Aorta (tissue), 5 donors: ENCODE measurements at regions of chrX and their contacts with region 1.

Region 1: DNA sequence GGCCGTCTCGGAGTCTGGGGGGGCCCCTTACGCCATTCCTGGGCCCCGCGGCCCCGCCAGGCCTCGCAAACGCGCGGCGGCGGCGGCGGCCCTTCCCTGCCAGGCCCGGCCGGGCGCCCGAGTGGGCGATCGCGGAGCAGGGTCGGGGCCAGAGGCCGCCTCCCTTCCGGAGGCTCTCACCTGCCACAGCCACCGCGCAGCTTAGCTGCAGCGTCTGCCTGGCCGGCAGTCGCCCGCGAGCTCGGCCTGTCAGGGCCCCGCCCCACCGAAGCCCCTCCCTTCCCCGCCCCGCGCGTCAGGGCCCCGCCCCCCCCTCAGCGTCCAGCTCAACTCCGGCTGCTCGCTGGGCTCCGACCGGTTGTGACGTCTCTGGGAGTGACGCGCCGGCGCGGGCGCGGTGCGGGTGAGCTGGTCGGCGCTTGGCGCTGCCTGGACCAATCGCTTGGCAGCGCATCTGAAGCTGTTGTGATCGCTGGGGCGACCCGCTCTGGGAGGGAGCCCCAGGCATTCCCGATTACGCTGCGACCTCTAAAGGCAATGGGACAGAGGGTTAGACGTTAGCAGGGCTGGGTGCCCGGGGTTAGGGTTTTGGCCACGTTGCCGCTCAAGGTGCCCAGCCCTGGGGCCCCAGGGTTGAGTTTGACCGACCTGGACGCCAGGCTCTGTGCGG is at the start of gene SLC10A3:
- DNase-seq: peak; percentile 96 to 97
- ATAC-seq: peak; percentile 93
- H3K4me3 ChIP-seq: peak within 1 kb of the TSS; percentile 56 to 61
- H3K27ac ChIP-seq: peak within 1 kb of the TSS; percentile 51 to 91
- H3K4me1 ChIP-seq: no peaks in the 10 kb centered on the region
- H3K27me3 ChIP-seq: peaks cover 0 to 1% of the 10 kb centered on the region in 2 donors
- total RNA-seq, gene SLC10A3: 24.2 to 27.7 TPM

Region 2: DNA sequence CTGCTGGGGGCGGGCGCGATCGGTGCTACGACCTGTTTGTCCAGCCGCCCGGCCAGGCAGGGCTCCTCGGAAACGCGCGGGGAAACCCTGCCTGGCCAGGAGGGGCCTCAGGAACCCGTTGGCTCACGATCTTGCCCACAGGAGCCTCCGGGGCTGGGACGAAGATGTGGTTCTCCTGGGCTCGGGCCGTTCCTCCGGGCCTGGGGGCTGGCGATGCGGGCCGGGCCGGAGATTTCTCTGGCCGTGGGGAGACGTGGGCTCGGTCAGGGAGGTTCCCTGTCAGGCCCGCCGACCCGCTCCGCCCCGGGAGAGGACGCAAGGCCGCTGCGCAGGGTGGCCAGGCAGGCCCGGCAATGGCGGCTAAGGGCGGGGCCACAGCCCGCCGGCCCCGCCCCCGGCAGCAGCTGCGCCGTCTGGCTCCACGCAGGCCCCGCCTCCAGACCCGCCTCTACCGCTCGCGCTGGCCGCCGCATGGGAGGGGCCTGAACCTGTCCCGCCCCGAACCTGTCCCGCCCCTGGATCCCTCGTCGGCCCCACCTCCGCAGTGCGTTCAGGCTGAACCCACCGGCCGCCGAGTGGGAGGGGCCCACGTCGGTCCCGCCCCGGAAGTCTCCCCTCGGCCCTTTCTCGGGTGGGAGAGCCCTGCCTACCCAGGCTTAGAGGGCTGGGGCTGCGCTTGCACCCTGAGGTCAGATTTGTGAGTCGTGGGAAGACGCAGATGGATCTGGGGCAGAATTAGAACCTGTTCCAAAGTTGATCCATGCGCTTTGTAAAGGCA is 25.5 kb after region 1 on chrX and contains the start of gene FAM3A:
- intact Hi-C with region 1: loop called in 1 of 2 experiments (anchors 1 kb)
- DNase-seq: peak; percentile 95 to 97
- ATAC-seq: peak; percentile 96
- H3K4me3 ChIP-seq: peak within 1 kb of the TSS; percentile 34 to 51
- H3K27ac ChIP-seq: peak within 1 kb of the TSS in 1 of 2 donors; percentile 82
- H3K4me1 ChIP-seq: no peaks in the 10 kb centered on the region
- H3K27me3 ChIP-seq: no peaks in the 10 kb centered on the region
- total RNA-seq, gene FAM3A: 26.1 to 34.5 TPM